ENCODE measurements at regions of chr16 and their contacts with region 1.

Region 1: GRCh38 chr16:56776562-56776961 is 46.6 kb downstream of the NUP93 start:
- DNase-seq: no peak
- H3K4me3 ChIP-seq: no peak overlapping the region
- H3K4me3 Mint-ChIP-seq: no peak overlapping the region
- H3K27ac Mint-ChIP-seq: no peak overlapping the region
- H3K4me1 ChIP-seq: no peaks in the 10 kb centered on the region
- H3K4me1 Mint-ChIP-seq: peaks cover 7% of the 10 kb centered on the region
- H3K27me3 ChIP-seq: no peaks in the 10 kb centered on the region
- H3K27me3 Mint-ChIP-seq: no peaks in the 10 kb centered on the region
- CTCF ChIP-seq: no peak

Region 2: GRCh38 chr16:56691885-56692284 is 84.7 kb before region 1 on chr16:
- CTCF ChIA-PET with region 1: no interaction called
- POLR2A ChIA-PET with region 1: no interaction called
- intact Hi-C with region 1: no loop called
- DNase-seq: peak; percentile 72 to 86
- H3K4me3 ChIP-seq: no peak overlapping the region
- H3K4me3 Mint-ChIP-seq: no peak overlapping the region
- H3K27ac Mint-ChIP-seq: peak overlapping the region; percentile 39
- H3K4me1 ChIP-seq: peaks cover 7% of the 10 kb centered on the region
- H3K4me1 Mint-ChIP-seq: peaks cover 17% of the 10 kb centered on the region
- H3K27me3 ChIP-seq: no peaks in the 10 kb centered on the region
- H3K27me3 Mint-ChIP-seq: no peaks in the 10 kb centered on the region
- CTCF ChIP-seq: no peak

Region 3: DNA sequence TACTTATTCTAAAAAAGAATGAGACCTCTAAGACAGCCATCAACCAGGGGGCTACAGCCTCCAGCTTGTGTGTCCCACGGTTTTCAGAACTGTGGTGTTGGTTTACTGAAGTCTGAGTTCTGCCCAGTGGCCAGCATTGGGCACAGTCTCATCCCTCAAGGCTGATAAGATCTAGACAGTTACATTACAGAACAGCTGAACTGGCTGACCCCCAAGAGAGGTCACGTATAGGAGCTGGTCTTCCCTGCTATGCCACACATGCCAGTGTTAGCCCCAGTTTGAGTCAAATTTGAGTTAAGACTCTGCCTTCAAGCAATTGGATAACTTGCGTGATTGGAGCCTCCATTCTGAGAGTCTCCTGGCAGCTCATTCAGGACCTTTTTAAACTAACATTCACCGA is 61.4 kb before region 1 on chr16:
- CTCF ChIA-PET with region 1: no interaction called
- POLR2A ChIA-PET with region 1: interaction called, 12 read pairs
- intact Hi-C with region 1: no loop called
- DNase-seq: no peak
- H3K4me3 ChIP-seq: no peak overlapping the region
- H3K4me3 Mint-ChIP-seq: no peak overlapping the region
- H3K27ac Mint-ChIP-seq: no peak overlapping the region
- H3K4me1 ChIP-seq: no peaks in the 10 kb centered on the region
- H3K4me1 Mint-ChIP-seq: no peaks in the 10 kb centered on the region
- H3K27me3 ChIP-seq: no peaks in the 10 kb centered on the region
- H3K27me3 Mint-ChIP-seq: peaks cover 4% of the 10 kb centered on the region
- CTCF ChIP-seq: no peak

Region 4: DNA sequence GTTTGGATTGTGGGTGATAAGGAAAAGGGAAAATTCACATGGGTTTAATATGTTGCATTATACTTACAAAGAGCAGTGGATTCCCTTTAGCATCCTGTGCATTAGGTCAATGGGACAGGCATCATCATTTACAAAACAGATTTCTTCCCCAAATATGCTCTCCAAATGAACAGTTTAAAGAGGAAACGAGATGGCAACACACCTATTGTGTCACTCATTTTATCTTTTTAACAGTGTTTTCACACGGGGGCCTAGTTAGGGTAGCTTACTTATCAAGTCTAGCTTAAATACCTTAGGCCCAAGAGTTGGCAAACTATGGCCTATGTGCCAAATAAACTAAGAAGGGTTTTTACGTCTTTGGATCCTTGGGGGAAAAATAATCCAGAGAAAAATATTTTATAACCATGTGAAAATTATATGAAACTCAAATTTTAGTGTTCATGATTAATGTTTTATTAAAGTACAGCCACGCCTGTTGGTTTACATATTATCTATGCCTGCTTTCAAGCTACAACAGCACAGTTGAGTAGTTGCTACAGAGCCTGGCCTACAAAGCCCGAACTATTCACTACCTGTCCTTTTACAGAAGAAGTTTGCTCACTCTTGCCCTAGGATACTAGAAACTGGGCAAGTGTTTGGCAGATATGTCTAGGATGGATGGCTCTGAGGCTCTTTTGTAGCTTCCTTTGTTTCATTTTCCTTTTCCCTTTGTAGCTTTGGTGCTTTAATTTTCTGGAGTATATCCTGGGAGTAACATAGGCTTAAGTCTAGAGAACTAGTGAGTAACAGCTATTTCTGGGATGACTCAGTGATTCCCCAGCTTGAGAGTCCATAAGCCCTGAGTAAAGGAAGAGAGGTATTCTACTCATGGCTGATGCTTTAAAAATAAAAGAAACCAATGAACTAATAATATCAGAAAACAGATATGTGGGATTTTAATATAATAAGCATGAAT is 34.3 kb before region 1 on chr16:
- CTCF ChIA-PET with region 1: no interaction called
- POLR2A ChIA-PET with region 1: no interaction called
- intact Hi-C with region 1: loop called (anchors 5 kb)
- DNase-seq: peak in 1 of 2 experiments; percentile 50
- H3K4me3 ChIP-seq: no peak overlapping the region
- H3K4me3 Mint-ChIP-seq: no peak overlapping the region
- H3K27ac Mint-ChIP-seq: peak overlapping the region; percentile 29
- H3K4me1 ChIP-seq: peaks cover 49% of the 10 kb centered on the region
- H3K4me1 Mint-ChIP-seq: peaks cover 41% of the 10 kb centered on the region
- H3K27me3 ChIP-seq: no peaks in the 10 kb centered on the region
- H3K27me3 Mint-ChIP-seq: no peaks in the 10 kb centered on the region
- CTCF ChIP-seq: no peak

Region 5: GRCh38 chr16:56793492-56793891 is 16.9 kb after region 1 on chr16:
- CTCF ChIA-PET with region 1: no interaction called
- POLR2A ChIA-PET with region 1: no interaction called
- intact Hi-C with region 1: no loop called
- DNase-seq: peak in 1 of 2 experiments; percentile 50
- H3K4me3 ChIP-seq: no peak overlapping the region
- H3K4me3 Mint-ChIP-seq: no peak overlapping the region
- H3K27ac Mint-ChIP-seq: no peak overlapping the region
- H3K4me1 ChIP-seq: no peaks in the 10 kb centered on the region
- H3K4me1 Mint-ChIP-seq: peaks cover 7% of the 10 kb centered on the region
- H3K27me3 ChIP-seq: no peaks in the 10 kb centered on the region
- H3K27me3 Mint-ChIP-seq: no peaks in the 10 kb centered on the region
- CTCF ChIP-seq: peak; percentile 63 to 68

Measured in Caco-2 (cell line).